ENCODE measurements at regions of chr9 and their contacts with region 1.

Region 1: GRCh38 chr9:112819635-112820496 is 69.3 kb downstream of the SNX30 start:
- DNase-seq: peak; percentile 38 to 68
- ATAC-seq: peak; percentile 91 to 99 (median 96)
- H3K4me3 ChIP-seq: no peak overlapping the region
- H3K27ac ChIP-seq: peak overlapping the region in 2 of 10 donors; percentile 15 to 42
- H3K4me1 ChIP-seq: peaks cover 0 to 21% (median 11%) of the 10 kb centered on the region in 9 donors
- H3K27me3 ChIP-seq: no peaks in the 10 kb centered on the region
- CTCF ChIP-seq: peak; percentile 40 to 82 (median 72)

Region 2: GRCh38 chr9:112086627-112087026 is 733.2 kb before region 1 on chr9:
- intact Hi-C with region 1: loop called in 1 of 10 experiments (anchors 10 kb)
- DNase-seq: no peak
- ATAC-seq: no peak
- H3K4me3 ChIP-seq: no peak overlapping the region
- H3K27ac ChIP-seq: no peak overlapping the region
- H3K4me1 ChIP-seq: peaks cover 0 to 6% (median 0%) of the 10 kb centered on the region in 9 donors
- H3K27me3 ChIP-seq: no peaks in the 10 kb centered on the region
- CTCF ChIP-seq: peak; percentile 13 to 77 (median 63)

Region 3: GRCh38 chr9:112750111-112750767 is 69.6 kb before region 1 on chr9 and contains the start of gene SNX30:
- intact Hi-C with region 1: loop called in 1 of 10 experiments (anchors 2 kb)
- DNase-seq: peak; percentile 89 to 92
- ATAC-seq: peak; percentile 96 to 98 (median 98)
- H3K4me3 ChIP-seq: peak within 1 kb of the TSS; percentile 73 to 100 (median 96)
- H3K27ac ChIP-seq: peak within 1 kb of the TSS; percentile 68 to 95 (median 80)
- H3K4me1 ChIP-seq: peaks cover 15 to 58% (median 30%) of the 10 kb centered on the region in 9 donors
- H3K27me3 ChIP-seq: no peaks in the 10 kb centered on the region
- CTCF ChIP-seq: peak in 2 of 9 donors; percentile 35 to 38
- total RNA-seq, gene SNX30: 3.1 to 7.2 (median 4.0) TPM